ENCODE measurements at regions of chr3 and their contacts with region 1.

Region 1: DNA sequence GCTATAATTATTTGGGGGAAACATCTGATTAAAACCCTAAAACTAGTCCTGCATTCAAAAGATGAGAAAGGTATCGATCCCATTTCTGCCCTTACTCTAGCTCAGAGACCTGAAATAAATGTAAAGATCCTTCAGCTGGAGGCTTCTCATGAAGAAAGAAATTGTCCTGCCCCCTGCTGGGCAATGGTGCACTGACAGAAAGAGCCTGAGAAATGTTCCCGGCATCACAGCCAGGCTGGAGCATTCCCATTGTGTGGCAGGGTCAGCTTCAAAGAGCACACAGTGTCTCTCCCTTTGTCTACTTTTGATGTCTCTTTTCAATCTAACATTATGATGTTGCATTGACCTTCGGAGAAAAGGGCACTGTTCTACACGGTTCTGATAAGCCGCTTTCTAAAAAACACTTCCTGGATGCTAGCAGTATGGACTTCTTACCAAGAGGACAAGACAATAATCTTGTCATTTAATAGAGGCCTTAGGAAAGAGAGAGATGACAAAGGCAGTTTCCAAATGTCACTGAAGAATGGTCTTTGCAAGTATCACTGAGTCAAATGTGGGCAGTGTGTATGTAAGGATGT is 287.5 kb downstream of the MAGI1 start:
- DNase-seq: peak; percentile 52
- H3K4me3 ChIP-seq: no peak overlapping the region
- H3K27ac ChIP-seq: no peak overlapping the region
- H3K4me1 ChIP-seq: no peaks in the 10 kb centered on the region
- H3K27me3 ChIP-seq: no peaks in the 10 kb centered on the region
- CTCF ChIP-seq: peak; percentile 76 to 79
- POLR2A ChIP-seq: no peak

Region 2: DNA sequence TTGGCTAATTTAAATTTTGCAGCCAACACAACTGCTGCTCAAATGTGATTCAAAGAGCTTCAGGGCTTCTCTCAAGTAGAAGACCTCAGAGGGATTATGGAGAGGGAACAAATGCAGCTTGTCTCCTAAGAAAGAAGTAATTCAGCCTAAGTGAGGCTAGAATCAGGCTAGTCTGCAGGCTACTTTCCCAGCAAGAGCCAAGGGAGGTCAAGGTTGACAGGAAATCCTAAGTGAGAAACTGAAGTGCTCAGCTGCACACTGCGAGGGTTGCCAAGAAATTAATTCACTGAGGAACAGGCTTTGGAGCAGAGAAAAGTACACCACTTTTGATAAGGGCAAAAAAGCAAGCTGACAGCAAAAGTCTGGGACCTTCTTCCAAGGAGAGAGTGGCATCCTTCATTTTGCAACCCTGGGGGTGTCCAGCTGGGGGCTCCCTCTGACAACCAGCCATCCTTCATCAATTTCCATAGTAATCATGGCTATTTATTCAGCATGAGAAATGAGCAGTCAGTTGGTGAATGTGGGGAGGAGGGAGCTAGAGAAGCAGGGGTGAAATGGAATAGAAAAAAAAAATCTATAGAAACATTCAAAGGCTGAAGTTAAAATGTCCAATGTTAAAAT is 417.1 kb before region 1 on chr3:
- CTCF ChIA-PET with region 1: interaction called, 12 read pairs
- POLR2A ChIA-PET with region 1: no interaction called
- dilution Hi-C with region 1: no loop called
- intact Hi-C with region 1: no loop called
- DNase-seq: peak; percentile 63
- H3K4me3 ChIP-seq: no peak overlapping the region
- H3K27ac ChIP-seq: no peak overlapping the region
- H3K4me1 ChIP-seq: no peaks in the 10 kb centered on the region
- H3K27me3 ChIP-seq: peaks cover 0 to 11% of the 10 kb centered on the region in 2 experiments
- CTCF ChIP-seq: peak; percentile 23 to 26
- POLR2A ChIP-seq: no peak

Region 3: DNA sequence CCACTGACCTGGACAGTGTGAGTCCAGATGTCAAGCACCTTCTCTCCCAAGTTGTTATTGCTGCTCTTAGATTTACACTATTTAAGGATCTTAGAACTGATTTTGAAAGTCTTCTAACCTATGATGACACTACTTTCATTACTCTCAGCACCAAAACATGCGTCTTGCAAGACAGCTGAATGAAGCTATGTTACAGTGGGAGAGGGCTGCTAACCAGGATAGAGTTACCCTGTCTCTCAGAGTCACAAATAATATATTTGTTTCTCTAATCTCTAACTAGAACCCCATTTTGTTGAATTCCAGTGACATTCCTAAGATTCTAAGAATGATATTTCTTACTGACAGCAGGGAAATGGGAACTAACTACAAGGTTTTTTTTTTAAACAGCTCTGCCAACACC is 168.0 kb before region 1 on chr3:
- CTCF ChIA-PET with region 1: no interaction called
- POLR2A ChIA-PET with region 1: no interaction called
- dilution Hi-C with region 1: no loop called
- intact Hi-C with region 1: no loop called
- DNase-seq: no peak
- H3K4me3 ChIP-seq: no peak overlapping the region
- H3K27ac ChIP-seq: no peak overlapping the region
- H3K4me1 ChIP-seq: no peaks in the 10 kb centered on the region
- H3K27me3 ChIP-seq: no peaks in the 10 kb centered on the region
- CTCF ChIP-seq: no peak
- POLR2A ChIP-seq: no peak

Region 4: GRCh38 chr3:65732051-65732935 is 18.9 kb before region 1 on chr3:
- CTCF ChIA-PET with region 1: interaction called, 22 read pairs
- POLR2A ChIA-PET with region 1: no interaction called
- dilution Hi-C with region 1: no loop called
- intact Hi-C with region 1: no loop called
- DNase-seq: peak; percentile 73
- H3K4me3 ChIP-seq: no peak overlapping the region
- H3K27ac ChIP-seq: no peak overlapping the region
- H3K4me1 ChIP-seq: no peaks in the 10 kb centered on the region
- H3K27me3 ChIP-seq: no peaks in the 10 kb centered on the region
- CTCF ChIP-seq: peak; percentile 71 to 74
- POLR2A ChIP-seq: no peak

Region 5: DNA sequence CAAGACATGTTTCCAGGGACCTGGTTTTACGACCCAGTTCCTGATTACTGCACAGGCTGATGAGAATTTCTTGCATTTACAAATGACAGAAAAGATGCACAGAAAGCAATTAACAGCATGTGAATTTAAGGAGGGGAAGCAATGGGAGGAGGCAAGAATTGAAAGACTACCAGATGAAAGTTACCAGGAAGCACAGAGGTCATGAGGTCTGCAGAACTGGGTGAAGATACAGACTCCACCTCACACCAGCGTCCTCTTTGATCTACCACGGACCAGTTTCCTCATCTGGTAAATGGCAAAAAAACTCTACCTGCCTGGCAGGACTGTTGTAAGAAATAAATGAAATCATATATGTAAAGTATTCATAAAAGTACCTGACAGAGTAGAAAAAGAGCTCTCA is 21.5 kb after region 1 on chr3:
- CTCF ChIA-PET with region 1: interaction called, 16 read pairs
- POLR2A ChIA-PET with region 1: no interaction called
- dilution Hi-C with region 1: no loop called
- intact Hi-C with region 1: no loop called
- DNase-seq: no peak
- H3K4me3 ChIP-seq: no peak overlapping the region
- H3K27ac ChIP-seq: no peak overlapping the region
- H3K4me1 ChIP-seq: no peaks in the 10 kb centered on the region
- H3K27me3 ChIP-seq: no peaks in the 10 kb centered on the region
- CTCF ChIP-seq: no peak
- POLR2A ChIP-seq: no peak

Region 6: GRCh38 chr3:65902304-65902793 is 151.1 kb after region 1 on chr3:
- CTCF ChIA-PET with region 1: no interaction called
- POLR2A ChIA-PET with region 1: no interaction called
- dilution Hi-C with region 1: no loop called
- intact Hi-C with region 1: no loop called
- DNase-seq: no peak
- H3K4me3 ChIP-seq: no peak overlapping the region
- H3K27ac ChIP-seq: no peak overlapping the region
- H3K4me1 ChIP-seq: peaks cover 37% of the 10 kb centered on the region
- H3K27me3 ChIP-seq: no peaks in the 10 kb centered on the region
- CTCF ChIP-seq: no peak
- POLR2A ChIP-seq: no peak

Measured in endothelial cell of umbilical vein (primary cell).